ENCODE measurements at regions of chr14 and their contacts with region 1.

Region 1: DNA sequence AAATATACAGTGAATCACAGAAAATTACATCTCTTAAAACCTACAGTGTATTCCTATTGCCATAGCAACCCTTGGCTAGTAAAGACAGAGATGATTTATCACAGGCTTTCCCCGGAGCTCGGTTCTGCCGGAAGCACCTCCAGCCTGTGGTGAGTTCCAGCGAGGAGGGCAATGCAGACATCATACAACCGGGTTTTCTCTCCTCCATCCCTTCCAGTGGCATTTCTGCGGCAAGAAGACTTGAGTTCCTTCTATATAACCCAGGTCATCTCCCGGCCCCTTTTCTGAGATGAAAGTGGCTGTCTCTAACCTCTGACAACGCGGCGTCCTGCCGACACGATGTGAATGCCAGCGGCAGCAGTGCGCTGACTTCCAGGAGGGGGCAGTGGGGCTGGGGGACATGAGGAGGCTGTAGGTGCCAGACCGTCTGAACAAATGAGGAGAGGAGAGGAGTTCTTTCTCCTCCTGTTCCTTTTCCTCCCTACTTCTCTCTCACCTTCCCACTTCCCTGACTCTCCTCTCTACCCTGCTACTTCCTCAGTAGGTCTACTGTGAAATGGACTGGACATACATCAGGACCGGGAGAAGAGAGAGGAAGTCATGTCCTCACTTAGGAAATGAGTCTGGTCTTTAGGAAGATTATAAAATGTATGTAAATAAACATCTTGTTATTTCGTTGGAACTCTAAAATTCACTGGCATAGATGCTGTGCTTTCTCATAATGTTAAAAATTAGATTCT is 68.6 kb upstream of the MAX start:
- DNase-seq: peak; percentile 80
- ATAC-seq: peak; percentile 86
- H3K4me3 ChIP-seq: peak overlapping the region; percentile 65
- H3K27ac ChIP-seq: peak overlapping the region; percentile 56
- H3K4me1 ChIP-seq: peaks cover 18% of the 10 kb centered on the region
- H3K27me3 ChIP-seq: no peaks in the 10 kb centered on the region
- CTCF ChIP-seq: peak; percentile 76

Region 2: DNA sequence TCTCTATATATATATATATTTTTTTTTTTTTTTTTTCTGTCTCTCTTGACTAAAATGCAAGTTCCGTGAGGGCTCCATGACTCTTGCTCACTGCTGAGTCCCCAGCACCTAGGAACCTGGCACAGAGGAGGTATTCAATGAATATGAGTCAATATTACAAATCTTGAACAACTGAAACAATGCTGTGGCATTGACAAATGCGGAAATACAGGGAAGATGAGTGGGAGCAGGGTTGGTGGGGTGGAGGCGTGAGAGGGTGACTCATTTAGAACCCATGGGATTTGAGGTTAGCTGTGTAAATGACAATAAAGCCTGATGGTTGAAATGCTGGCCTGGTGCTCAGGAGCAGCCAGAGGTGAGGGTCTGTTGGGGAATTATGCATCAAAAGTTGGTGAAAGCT is 119.9 kb after region 1 on chr14:
- CTCF ChIA-PET with region 1: no interaction called
- POLR2A ChIA-PET with region 1: no interaction called
- intact Hi-C with region 1: loop called (anchors 2 kb)
- DNase-seq: peak; percentile 99
- ATAC-seq: peak; percentile 95
- H3K4me3 ChIP-seq: no peak overlapping the region
- H3K27ac ChIP-seq: peak overlapping the region; percentile 96
- H3K4me1 ChIP-seq: peaks cover 20% of the 10 kb centered on the region
- H3K27me3 ChIP-seq: no peaks in the 10 kb centered on the region
- CTCF ChIP-seq: no peak

Measured in PC-3 (cell line).